Esophagus muscularis mucosa (tissue), 4 donors: ENCODE measurements at regions of chr14 and their contacts with region 1.

Region 1: DNA sequence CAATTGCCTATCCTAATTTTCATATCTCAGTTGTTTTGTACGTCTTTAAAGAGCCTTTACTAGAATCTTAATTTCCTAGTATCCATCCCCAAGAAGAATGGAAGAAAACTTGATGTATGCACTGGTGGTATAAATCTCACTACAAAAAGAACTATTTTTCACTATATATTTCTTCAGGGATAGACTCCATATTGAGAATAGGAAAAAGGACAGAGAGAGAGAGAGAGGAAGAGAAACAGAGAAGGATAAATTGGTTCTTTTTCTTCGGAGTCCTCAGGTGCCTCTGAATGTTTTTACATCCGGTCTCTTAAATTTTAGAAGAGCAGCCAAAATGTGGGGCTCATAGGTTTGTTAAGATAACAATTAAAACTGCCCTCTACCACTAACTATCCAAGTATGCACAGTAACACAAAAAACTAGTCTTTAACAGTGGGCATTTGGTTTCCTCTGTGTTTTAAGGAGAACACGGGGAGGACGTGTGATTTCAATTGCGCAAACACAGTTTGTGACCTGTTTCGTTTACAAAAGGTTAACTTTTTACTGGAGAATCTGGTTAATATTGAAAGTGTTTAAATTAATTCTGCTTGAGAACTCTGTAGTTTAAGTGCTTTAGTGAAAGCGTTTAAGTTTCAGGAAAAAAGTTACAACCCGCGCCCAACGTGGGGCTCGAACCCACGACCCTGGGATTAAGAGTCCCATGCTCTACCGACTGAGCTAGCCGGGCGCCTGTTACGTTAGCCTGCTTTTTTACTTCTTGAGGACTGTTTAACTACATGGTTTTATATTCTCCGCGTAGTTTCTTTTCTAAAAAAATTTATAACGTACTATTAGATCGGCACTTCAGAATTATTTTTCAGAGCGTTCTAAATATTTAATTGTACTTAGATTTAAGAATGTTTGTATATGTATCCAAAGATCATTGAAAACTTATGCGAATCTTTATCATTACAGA is 5.1 kb upstream of the PSMA3 start:
- DNase-seq: peak; percentile 96
- H3K4me3 ChIP-seq: peak overlapping the region; percentile 54 to 69 (median 62)
- H3K27ac ChIP-seq: peak overlapping the region; percentile 78 to 83 (median 80)
- H3K4me1 ChIP-seq: peaks cover 0 to 18% (median 14%) of the 10 kb centered on the region in 4 donors
- H3K27me3 ChIP-seq: no peaks in the 10 kb centered on the region
- CTCF ChIP-seq: no peak
- EP300 ChIP-seq: no peak
- POLR2A ChIP-seq: no peak

Region 2: DNA sequence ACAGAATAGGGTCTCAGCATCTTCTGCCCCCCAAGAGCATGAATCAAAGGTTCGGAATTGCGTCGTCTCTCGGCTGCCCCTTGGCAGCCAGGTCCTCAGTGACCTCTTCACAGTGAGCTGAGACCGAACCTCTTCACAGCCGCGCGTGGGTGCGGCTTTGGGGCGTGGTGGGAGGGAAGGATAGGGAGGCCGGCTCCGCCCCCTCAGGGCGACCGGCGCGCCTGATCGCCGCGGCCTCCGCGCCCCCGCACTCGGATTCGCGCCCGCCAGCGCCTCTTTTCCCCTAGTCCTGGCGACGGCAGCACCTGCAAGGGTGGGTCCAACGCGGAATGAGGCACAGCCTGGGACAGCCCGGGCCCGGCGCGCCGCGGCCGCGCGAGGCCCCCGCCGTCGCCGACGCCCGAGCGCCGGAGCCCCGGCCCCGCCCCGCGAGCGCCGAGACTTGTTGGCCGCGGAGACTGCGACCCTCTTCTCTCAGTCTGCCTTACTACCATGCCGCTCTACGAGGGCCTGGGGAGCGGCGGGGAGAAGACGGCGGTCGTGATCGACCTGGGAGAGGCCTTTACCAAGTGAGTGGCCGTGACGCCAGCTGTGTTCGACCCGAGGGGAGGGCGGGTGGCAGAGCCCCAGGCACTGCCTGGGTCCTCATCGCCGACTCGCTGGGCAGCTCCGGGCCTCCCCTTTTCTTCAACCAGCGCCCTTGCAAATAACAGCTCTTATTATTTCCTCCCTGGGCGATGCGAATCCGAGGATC is 39.6 kb before region 1 on chr14 and contains the start of gene ACTR10:
- intact Hi-C with region 1: loop called (anchors 5 kb)
- DNase-seq: peak; percentile 95
- H3K4me3 ChIP-seq: peak within 1 kb of the TSS; percentile 74 to 97 (median 78)
- H3K27ac ChIP-seq: peak within 1 kb of the TSS; percentile 92 to 94 (median 93)
- H3K4me1 ChIP-seq: peaks cover 12 to 30% (median 26%) of the 10 kb centered on the region in 4 donors
- H3K27me3 ChIP-seq: no peaks in the 10 kb centered on the region
- CTCF ChIP-seq: peak in 1 of 3 experiments; percentile 8
- EP300 ChIP-seq: no peak
- POLR2A ChIP-seq: no peak
- total RNA-seq, gene ACTR10: 47.9 to 75.7 (median 60.5) TPM